GM12878 (cell line): ENCODE measurements at regions of chr22 and their contacts with region 1.

Region 1: DNA sequence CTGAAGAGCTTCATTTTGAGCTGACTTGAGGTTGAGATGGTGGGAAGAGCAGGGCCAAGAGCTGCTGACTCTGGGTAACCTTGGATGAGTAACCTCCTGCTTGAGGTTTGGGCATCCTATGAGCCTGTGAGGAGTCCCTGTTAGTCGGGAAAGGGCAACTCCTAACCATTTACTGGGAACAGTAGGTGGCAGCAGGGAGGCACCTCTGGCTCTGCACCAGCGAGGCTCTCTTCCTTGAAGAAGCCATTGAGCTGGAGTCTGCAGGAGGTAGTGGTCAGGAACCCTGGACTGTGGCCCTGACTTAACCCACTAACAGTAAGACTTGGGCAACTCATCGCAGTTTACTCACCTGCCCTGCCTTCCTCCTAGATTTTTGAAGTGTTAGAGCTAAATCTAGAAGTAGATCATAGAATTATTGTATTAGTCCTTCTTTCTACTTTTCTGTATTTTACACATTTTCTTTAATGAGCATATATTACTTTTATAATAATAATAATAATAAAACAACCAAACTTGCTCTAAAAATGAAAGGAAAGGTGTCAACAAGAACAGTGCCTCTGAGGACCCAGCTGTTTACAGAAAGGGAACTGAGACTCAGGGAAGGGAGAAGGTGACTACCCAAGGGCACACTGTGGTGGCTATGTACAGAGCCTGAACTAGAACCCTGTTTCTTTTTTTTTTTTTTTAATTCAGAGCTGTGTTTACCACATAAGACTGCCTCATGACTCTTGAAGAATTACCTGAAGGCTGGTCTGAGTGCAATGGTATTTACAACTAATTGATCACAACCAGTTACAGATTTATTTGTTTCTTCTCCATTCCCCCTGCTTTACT is 47.5 kb downstream of the MEI1 start:
- DNase-seq: peak; percentile 80
- ATAC-seq: peak; percentile 94
- H3K4me3 ChIP-seq: peak overlapping the region; percentile 34; the same call in 1 of the 2 replicates
- H3K27ac ChIP-seq: peak overlapping the region; percentile 69
- H3K4me1 ChIP-seq: peaks cover 42% of the 10 kb centered on the region
- H3K27me3 ChIP-seq: no peaks in the 10 kb centered on the region
- CTCF ChIP-seq: peak; percentile 75 to 81 (median 77)
- EP300 ChIP-seq: peak; percentile 65 to 85
- POLR2A ChIP-seq: no peak
- RAD21 ChIP-seq: peak; percentile 71

Region 2: DNA sequence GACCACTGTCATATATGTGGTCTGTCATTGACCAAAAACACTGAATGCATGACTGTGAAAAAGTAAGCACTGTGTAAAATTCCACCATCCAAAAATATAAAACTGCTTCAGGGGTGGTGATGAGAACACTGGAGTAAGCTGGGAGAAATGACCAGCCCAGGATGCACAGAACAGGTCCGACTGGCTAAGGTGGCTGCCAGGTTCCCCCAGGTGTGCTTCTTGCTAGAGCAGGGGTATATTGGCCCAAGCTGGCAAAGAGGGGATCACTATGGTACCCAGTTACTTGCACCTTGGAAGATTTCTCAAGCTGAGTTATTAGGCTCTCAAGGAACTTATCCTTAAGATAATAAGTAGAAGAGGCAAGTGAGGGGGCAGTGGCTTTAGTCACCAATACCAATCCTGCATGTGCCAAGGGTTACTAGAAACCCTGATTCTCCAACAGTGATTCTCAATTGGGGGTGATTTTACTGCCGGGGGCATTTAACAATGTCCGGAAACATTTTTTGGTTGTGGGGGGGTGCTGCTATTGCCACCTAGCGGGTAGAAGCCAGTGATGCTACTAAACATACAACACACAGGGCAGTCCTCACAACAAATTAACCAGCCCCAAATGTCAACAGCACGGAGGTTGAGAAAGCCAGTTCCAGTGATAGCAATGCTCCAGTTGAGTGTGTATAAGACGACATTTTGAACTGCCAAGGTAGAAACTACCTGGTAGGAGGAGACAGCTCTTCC is 73.8 kb before region 1 on chr22:
- CTCF ChIA-PET with region 1: no interaction called
- POLR2A ChIA-PET with region 1: no interaction called
- RAD21 ChIA-PET with region 1: no interaction called
- SMC1A ChIA-PET with region 1: no interaction called
- in situ Hi-C with region 1: no loop called
- intact Hi-C with region 1: no loop called
- DNase-seq: no peak
- ATAC-seq: peak; percentile 74
- H3K4me3 ChIP-seq: no peak overlapping the region
- H3K27ac ChIP-seq: no peak overlapping the region
- H3K4me1 ChIP-seq: no peaks in the 10 kb centered on the region
- H3K27me3 ChIP-seq: no peaks in the 10 kb centered on the region
- CTCF ChIP-seq: peak; percentile 27 to 48 (median 42); a peak in 3 of 6 replicates
- EP300 ChIP-seq: no peak
- POLR2A ChIP-seq: no peak
- RAD21 ChIP-seq: no peak

Region 3: DNA sequence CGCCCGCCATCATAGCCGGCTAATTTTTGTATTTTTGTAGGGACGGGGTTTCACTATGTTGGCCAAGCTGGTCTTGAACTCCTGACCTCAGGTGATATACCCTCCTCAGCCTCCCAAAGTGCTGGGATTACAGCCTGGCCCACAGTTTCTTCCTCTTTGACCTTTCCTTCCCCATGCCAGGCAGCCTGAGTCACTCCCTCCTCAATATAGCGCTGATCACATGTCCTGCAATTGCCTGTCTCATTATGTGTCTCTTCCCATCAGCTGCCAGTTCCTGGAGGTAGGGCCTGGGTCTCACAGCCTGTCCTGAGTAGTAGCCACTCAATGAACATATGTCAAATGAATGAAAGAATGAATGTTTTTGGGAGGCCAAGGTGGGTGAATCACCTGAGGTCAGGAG is 10.7 kb after region 1 on chr22:
- CTCF ChIA-PET with region 1: interaction called, 65 read pairs
- POLR2A ChIA-PET with region 1: no interaction called
- RAD21 ChIA-PET with region 1: interaction called, 7 read pairs
- SMC1A ChIA-PET with region 1: interaction called, 16 read pairs
- in situ Hi-C with region 1: no loop called
- intact Hi-C with region 1: no loop called
- DNase-seq: no peak
- ATAC-seq: no peak
- H3K4me3 ChIP-seq: no peak overlapping the region
- H3K27ac ChIP-seq: no peak overlapping the region
- H3K4me1 ChIP-seq: peaks cover 11% of the 10 kb centered on the region
- H3K27me3 ChIP-seq: no peaks in the 10 kb centered on the region
- CTCF ChIP-seq: no peak
- EP300 ChIP-seq: no peak
- POLR2A ChIP-seq: no peak
- RAD21 ChIP-seq: no peak

Region 4: GRCh38 chr22:41768430-41768829 is 21.6 kb after region 1 on chr22:
- CTCF ChIA-PET with region 1: interaction called, 65 read pairs
- POLR2A ChIA-PET with region 1: interaction called, 3 read pairs
- RAD21 ChIA-PET with region 1: interaction called, 7 read pairs
- SMC1A ChIA-PET with region 1: interaction called, 16 read pairs
- in situ Hi-C with region 1: no loop called
- intact Hi-C with region 1: no loop called
- DNase-seq: no peak
- ATAC-seq: peak; percentile 59
- H3K4me3 ChIP-seq: no peak overlapping the region
- H3K27ac ChIP-seq: no peak overlapping the region
- H3K4me1 ChIP-seq: no peaks in the 10 kb centered on the region
- H3K27me3 ChIP-seq: no peaks in the 10 kb centered on the region
- CTCF ChIP-seq: no peak
- EP300 ChIP-seq: no peak
- POLR2A ChIP-seq: no peak
- RAD21 ChIP-seq: no peak

Region 5: GRCh38 chr22:41780746-41781505 is 34.1 kb after region 1 on chr22:
- CTCF ChIA-PET with region 1: interaction called, 25 read pairs
- POLR2A ChIA-PET with region 1: interaction called, 12 read pairs
- RAD21 ChIA-PET with region 1: interaction called, 35 read pairs
- SMC1A ChIA-PET with region 1: interaction called, 35 read pairs
- in situ Hi-C with region 1: no loop called
- intact Hi-C with region 1: no loop called
- DNase-seq: peak; percentile 90
- ATAC-seq: peak; percentile 97
- H3K4me3 ChIP-seq: peak overlapping the region; percentile 76
- H3K27ac ChIP-seq: peak overlapping the region; percentile 54
- H3K4me1 ChIP-seq: peaks cover 11% of the 10 kb centered on the region
- H3K27me3 ChIP-seq: no peaks in the 10 kb centered on the region
- CTCF ChIP-seq: no peak
- EP300 ChIP-seq: peak in 1 of 2 experiments; percentile 34; a peak in 1 of 4 replicates
- POLR2A ChIP-seq: peak; percentile 81
- RAD21 ChIP-seq: no peak

Region 6: DNA sequence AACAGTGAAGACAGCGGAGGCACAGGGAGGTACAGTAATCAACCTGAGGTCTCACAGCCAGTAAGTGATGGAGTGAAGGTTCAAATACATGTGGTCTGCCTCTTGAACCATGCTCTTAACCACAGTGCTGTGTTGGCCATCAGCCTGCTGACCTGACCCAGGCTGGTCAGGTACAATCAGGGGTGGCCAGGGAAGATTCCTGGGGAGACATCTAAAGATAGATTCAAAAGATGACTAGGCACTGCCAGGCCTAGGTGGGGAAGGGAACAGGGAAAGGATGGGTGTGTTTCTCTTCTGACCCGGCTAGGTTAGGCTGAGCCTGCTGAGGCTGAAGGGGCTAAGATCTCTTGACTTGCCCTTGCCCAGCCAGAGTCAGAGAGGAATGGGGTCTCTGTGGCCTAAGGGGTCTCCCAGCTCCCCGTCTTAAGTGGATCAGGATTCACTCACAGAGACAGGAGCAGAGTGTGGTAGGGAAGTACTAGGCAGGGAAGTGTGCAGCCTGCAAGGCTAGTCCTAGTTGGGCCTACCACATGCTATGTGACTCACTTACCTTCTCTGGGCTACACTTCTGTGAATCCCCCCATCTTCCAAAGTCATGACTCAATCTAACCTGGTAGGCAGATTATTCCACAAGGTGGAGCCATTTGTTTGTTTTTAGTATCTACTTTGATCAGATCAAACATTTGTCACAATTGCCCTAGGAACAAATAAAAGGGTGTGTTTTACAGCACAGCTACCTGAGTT is 75.7 kb after region 1 on chr22:
- CTCF ChIA-PET with region 1: interaction called, 11 read pairs
- POLR2A ChIA-PET with region 1: no interaction called
- RAD21 ChIA-PET with region 1: no interaction called
- SMC1A ChIA-PET with region 1: interaction called, 4 read pairs
- in situ Hi-C with region 1: no loop called
- intact Hi-C with region 1: no loop called
- DNase-seq: peak; percentile 47
- ATAC-seq: peak; percentile 92
- H3K4me3 ChIP-seq: no peak overlapping the region
- H3K27ac ChIP-seq: no peak overlapping the region
- H3K4me1 ChIP-seq: no peaks in the 10 kb centered on the region; the same call in 1 of the 2 replicates
- H3K27me3 ChIP-seq: no peaks in the 10 kb centered on the region
- CTCF ChIP-seq: peak; percentile 55 to 67 (median 59); a peak in 5 of 6 replicates
- EP300 ChIP-seq: no peak
- POLR2A ChIP-seq: no peak
- RAD21 ChIP-seq: peak; percentile 82

Region 7: GRCh38 chr22:41873391-41873790 is 126.6 kb after region 1 on chr22:
- CTCF ChIA-PET with region 1: interaction called, 10 read pairs
- POLR2A ChIA-PET with region 1: no interaction called
- RAD21 ChIA-PET with region 1: interaction called, 3 read pairs
- SMC1A ChIA-PET with region 1: no interaction called
- in situ Hi-C with region 1: no loop called
- intact Hi-C with region 1: no loop called
- DNase-seq: no peak
- ATAC-seq: peak; percentile 34
- H3K4me3 ChIP-seq: no peak overlapping the region
- H3K27ac ChIP-seq: no peak overlapping the region
- H3K4me1 ChIP-seq: no peaks in the 10 kb centered on the region
- H3K27me3 ChIP-seq: no peaks in the 10 kb centered on the region
- CTCF ChIP-seq: no peak
- EP300 ChIP-seq: no peak
- POLR2A ChIP-seq: no peak
- RAD21 ChIP-seq: no peak

Region 8: GRCh38 chr22:41940832-41941765 is 194.3 kb after region 1 on chr22:
- CTCF ChIA-PET with region 1: interaction called, 19 read pairs
- POLR2A ChIA-PET with region 1: interaction called, 3 read pairs
- RAD21 ChIA-PET with region 1: interaction called, 24 read pairs
- SMC1A ChIA-PET with region 1: interaction called, 9 read pairs
- in situ Hi-C with region 1: no loop called
- intact Hi-C with region 1: loop called (anchors 1 kb)
- DNase-seq: no peak
- ATAC-seq: peak; percentile 60
- H3K4me3 ChIP-seq: 0 out of 2 replicates have a peak overlapping the region, but pooled peaks have one; percentile 4
- H3K27ac ChIP-seq: peak overlapping the region; percentile 94
- H3K4me1 ChIP-seq: peaks cover 66% of the 10 kb centered on the region
- H3K27me3 ChIP-seq: no peaks in the 10 kb centered on the region
- CTCF ChIP-seq: peak; percentile 88 to 97 (median 95)
- EP300 ChIP-seq: peak in 1 of 2 experiments; percentile 11; a peak in 1 of 4 replicates
- POLR2A ChIP-seq: peak; percentile 33; the same call in 1 of the 2 replicates
- RAD21 ChIP-seq: peak; percentile 92

Region 9: GRCh38 chr22:41976401-41976901 is 229.7 kb after region 1 on chr22:
- CTCF ChIA-PET with region 1: no interaction called
- POLR2A ChIA-PET with region 1: no interaction called
- RAD21 ChIA-PET with region 1: no interaction called
- SMC1A ChIA-PET with region 1: no interaction called
- in situ Hi-C with region 1: no loop called
- intact Hi-C with region 1: no loop called
- DNase-seq: no peak
- ATAC-seq: peak; percentile 32
- H3K4me3 ChIP-seq: peak overlapping the region; percentile 58; the same call in 1 of the 2 replicates
- H3K27ac ChIP-seq: no peak overlapping the region
- H3K4me1 ChIP-seq: peaks cover 7% of the 10 kb centered on the region
- H3K27me3 ChIP-seq: peaks cover 5 to 12% of the 10 kb centered on the region in 2 experiments
- CTCF ChIP-seq: no peak
- EP300 ChIP-seq: no peak
- POLR2A ChIP-seq: no peak
- RAD21 ChIP-seq: no peak

Region 10: DNA sequence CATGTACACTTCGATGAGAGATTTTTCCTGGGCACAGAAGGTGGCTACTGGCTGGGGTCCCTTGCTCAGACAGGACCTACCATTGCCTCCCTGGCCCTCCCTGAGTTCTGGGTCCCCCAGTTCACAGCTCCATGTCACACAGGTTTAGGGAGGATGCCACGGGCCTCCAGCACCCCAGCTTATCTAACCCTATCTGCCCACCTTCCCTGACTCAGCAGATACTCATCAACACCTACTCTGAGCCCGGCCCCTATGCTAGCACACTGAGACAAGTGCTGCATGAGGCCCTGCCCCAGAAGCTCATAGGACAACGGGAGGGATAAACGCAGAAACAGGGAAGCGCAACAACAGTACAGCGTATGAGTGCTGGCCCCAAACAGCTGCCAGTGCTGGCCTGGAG is 314.3 kb after region 1 on chr22:
- CTCF ChIA-PET with region 1: no interaction called
- POLR2A ChIA-PET with region 1: no interaction called
- RAD21 ChIA-PET with region 1: no interaction called
- SMC1A ChIA-PET with region 1: no interaction called
- in situ Hi-C with region 1: no loop called
- intact Hi-C with region 1: no loop called
- DNase-seq: no peak
- ATAC-seq: no peak
- H3K4me3 ChIP-seq: no peak overlapping the region
- H3K27ac ChIP-seq: no peak overlapping the region
- H3K4me1 ChIP-seq: no peaks in the 10 kb centered on the region
- H3K27me3 ChIP-seq: no peaks in the 10 kb centered on the region
- CTCF ChIP-seq: no peak
- EP300 ChIP-seq: no peak
- POLR2A ChIP-seq: no peak
- RAD21 ChIP-seq: no peak